A549 (cell line): ENCODE measurements at regions of chr6 and their contacts with region 1.

Region 1: DNA sequence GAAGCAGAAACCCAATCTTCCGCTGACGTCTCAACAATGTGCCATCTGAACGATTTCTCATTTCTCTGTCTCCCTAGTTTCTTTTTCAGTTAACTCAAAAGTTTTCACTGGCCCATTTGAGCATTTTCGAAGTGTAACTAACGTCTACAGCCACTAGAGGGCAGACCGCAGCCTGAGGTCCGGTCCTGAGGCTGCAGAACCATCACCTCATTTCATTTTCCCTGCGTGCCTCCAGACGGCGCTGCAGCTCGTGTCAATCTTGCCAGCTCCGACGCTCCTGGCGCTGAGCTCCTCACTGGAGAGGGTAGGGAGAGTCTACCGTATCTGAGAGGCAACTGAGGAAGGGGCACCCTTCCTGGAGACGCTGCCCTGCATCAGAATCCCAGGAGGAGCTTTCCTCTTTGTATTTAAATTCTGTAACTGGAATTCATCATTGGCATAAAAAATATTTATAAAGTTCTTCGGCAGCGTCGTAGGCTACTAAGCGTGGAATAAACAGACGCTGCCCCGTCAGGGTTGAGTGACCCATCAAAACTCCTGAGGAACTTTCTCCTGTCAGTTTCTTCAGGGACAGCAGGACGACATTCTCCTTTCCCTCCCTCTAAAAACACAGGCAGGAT is 28.5 kb upstream of the DTNBP1 start:
- DNase-seq: peak; percentile 51 to 85
- ATAC-seq: peak; percentile 99 to 100
- H3K4me3 ChIP-seq: peak overlapping the region; percentile 32; the same call in 2 of the 3 replicates
- H3K27ac ChIP-seq: no peak overlapping the region
- H3K4me1 ChIP-seq: no peaks in the 10 kb centered on the region; the same call in 2 of the 3 replicates
- CTCF ChIP-seq: peak; percentile 98
- EP300 ChIP-seq: no peak
- POLR2A ChIP-seq: no peak
- RAD21 ChIP-seq: peak; percentile 88 to 94

Region 2: GRCh38 chr6:15708231-15708630 is 16.9 kb after region 1 on chr6:
- CTCF ChIA-PET with region 1: interaction called, 16 read pairs
- POLR2A ChIA-PET with region 1: no interaction called
- DNase-seq: no peak
- ATAC-seq: no peak
- H3K4me3 ChIP-seq: no peak overlapping the region
- H3K27ac ChIP-seq: no peak overlapping the region
- H3K4me1 ChIP-seq: no peaks in the 10 kb centered on the region
- CTCF ChIP-seq: no peak
- EP300 ChIP-seq: no peak
- POLR2A ChIP-seq: no peak
- RAD21 ChIP-seq: no peak

Region 3: DNA sequence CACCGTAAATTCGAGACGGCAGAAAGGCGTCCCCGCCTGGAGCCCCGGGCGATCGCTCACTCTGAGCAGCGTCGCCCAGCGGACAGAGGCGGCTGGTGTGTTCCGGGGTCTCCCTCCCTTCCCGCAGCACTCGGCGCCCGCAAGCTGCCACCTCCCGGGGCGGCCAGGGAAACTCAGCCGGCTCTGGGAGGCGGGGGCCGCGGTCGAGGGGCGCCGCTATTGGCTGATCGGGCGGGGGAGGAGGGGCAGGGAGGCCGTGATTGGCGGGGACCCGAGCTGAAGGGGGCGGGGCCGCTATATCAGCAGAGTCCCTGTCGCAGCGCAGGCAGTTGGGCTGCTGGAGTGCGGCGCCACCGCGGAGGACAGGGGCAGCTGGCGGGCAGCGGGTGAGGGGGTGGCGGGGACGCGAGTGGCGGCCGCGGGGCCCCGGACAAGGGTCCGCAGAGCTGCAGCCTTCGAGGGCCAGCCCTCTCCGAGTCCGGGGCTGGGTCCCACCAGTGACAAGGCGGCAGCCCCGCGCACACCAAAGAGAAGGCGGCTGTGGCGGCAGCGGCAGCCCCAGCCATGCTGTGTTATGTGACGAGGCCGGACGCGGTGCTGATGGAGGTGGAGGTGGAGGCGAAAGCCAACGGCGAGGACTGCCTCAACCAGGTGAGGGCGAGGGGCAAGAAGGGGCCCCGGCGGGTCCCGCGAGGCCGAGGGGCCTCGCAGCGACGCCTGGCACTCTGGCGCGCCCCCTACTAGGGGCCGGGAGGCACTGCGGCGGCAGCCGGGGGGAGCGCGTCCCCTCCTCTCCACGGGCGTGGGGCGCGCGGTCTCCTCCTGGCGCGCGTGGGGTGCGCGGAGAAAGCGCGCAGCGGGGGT is 437.6 kb after region 1 on chr6 and contains the start of gene MYLIP:
- CTCF ChIA-PET with region 1: interaction called, 15 read pairs
- POLR2A ChIA-PET with region 1: interaction called, 23 read pairs
- DNase-seq: peak; percentile 77 to 90
- ATAC-seq: peak; percentile 88 to 94
- H3K4me3 ChIP-seq: peak within 1 kb of the TSS; percentile 81
- H3K27ac ChIP-seq: peak within 1 kb of the TSS; percentile 87 to 93
- H3K4me1 ChIP-seq: peaks cover 28% of the 10 kb centered on the region; the same call in 2 of the 3 replicates
- CTCF ChIP-seq: peak; percentile 59
- EP300 ChIP-seq: no peak
- POLR2A ChIP-seq: peak; percentile 100
- RAD21 ChIP-seq: peak; percentile 7 to 59; a peak in 3 of 5 replicates
- polyA plus RNA-seq, gene MYLIP: 8.6 and 9.1 TPM in 2 replicates

Region 4: GRCh38 chr6:16206595-16207037 is 515.3 kb after region 1 on chr6:
- CTCF ChIA-PET with region 1: interaction called, 18 read pairs
- POLR2A ChIA-PET with region 1: no interaction called
- DNase-seq: peak; percentile 49
- ATAC-seq: peak; percentile 84 to 85
- H3K4me3 ChIP-seq: no peak overlapping the region
- H3K27ac ChIP-seq: no peak overlapping the region
- H3K4me1 ChIP-seq: no peaks in the 10 kb centered on the region
- CTCF ChIP-seq: peak; percentile 83
- EP300 ChIP-seq: no peak
- POLR2A ChIP-seq: no peak
- RAD21 ChIP-seq: peak; percentile 81 to 82